ENCODE measurements at regions of chr3 and their contacts with region 1.

Region 1: GRCh38 chr3:70006089-70006488 is 6.6 kb downstream of the SAMMSON start:
- DNase-seq: no peak

Region 2: DNA sequence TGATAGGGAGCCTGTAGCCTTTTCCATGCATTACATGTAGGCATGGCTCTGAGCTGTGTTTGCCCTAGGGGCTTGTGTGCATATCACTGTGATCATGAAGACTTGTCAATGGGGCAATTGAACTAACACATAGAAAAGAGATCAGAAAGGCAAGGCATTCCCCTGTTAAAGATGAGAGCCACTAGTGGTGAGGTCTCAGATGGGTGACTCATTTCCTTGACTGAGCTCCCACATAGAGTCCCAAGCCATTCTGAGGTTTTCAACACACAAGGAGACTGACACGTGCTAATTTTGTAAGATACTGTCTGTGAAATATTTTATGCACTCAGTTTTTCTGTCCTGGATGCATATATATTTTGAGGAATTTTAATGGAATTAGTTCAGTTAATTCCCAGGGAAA is 47.2 kb after region 1 on chr3:
- intact Hi-C with region 1: loop called (anchors 2 kb)
- DNase-seq: no peak

Region 3: DNA sequence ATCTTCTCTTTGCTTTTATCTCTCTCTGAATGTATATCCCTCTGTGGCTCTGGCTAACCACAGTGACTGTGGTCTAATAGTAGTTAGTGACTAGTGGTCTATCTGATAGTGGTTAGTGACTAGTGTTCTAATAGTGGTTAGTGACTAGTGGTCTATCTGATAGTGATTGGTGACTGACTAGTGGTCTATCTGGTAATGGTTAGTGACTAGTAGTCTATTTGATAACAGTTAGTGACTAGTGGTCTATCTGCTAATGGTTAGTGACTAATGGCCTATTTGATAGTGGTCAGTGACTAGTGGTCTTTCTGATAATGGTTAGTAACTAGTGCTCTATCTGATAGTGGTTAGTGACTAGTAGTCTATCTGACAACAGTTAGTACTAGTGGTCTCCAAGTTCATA is 195.9 kb after region 1 on chr3:
- intact Hi-C with region 1: no loop called
- DNase-seq: no peak